PC-9 (cell line): ENCODE measurements at regions of chr10 and their contacts with region 1.

Region 1: DNA sequence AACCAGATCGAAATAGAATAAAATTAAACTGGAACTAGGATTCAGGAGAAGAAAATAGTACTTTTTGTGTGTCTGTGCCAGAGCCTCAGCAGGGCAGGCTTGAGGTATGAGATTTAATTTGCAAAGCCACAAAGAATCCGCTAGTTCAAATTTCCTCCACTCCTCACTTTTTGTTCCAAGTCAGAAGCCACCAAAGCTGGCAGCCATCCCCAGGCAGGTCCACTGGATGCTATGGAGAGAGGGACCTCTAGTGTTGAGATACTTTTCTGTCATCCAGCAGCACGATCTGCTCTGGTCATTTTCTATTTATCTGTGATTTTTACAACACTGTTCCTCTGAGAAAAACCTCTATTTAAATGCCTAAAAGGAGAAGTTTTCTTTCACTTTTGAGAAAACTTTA is 147.9 kb upstream of the FRMD4A start:
- DNase-seq: peak in 1 of 2 experiments; percentile 46
- H3K4me3 ChIP-seq: no peak overlapping the region
- H3K27ac ChIP-seq: no peak overlapping the region
- H3K4me1 ChIP-seq: peaks cover 7% of the 10 kb centered on the region; the same call in 1 of the 2 replicates
- H3K27me3 ChIP-seq: no peaks in the 10 kb centered on the region
- CTCF ChIP-seq: peak; percentile 49; the same call in 1 of the 2 replicates

Region 2: GRCh38 chr10:13787015-13787421 is 691.6 kb before region 1 on chr10:
- CTCF ChIA-PET with region 1: no interaction called
- POLR2A ChIA-PET with region 1: no interaction called
- intact Hi-C with region 1: loop called (anchors 1 kb)
- DNase-seq: no peak
- H3K4me3 ChIP-seq: no peak overlapping the region
- H3K27ac ChIP-seq: no peak overlapping the region
- H3K4me1 ChIP-seq: peaks cover 15% of the 10 kb centered on the region
- H3K27me3 ChIP-seq: no peaks in the 10 kb centered on the region
- CTCF ChIP-seq: no peak

Region 3: GRCh38 chr10:14200698-14201544 is 277.7 kb before region 1 on chr10:
- CTCF ChIA-PET with region 1: interaction called, 4 read pairs
- POLR2A ChIA-PET with region 1: no interaction called
- intact Hi-C with region 1: loop called (anchors 1 kb)
- DNase-seq: peak in 1 of 2 experiments; percentile 8
- H3K4me3 ChIP-seq: no peak overlapping the region
- H3K27ac ChIP-seq: no peak overlapping the region
- H3K4me1 ChIP-seq: no peaks in the 10 kb centered on the region
- H3K27me3 ChIP-seq: no peaks in the 10 kb centered on the region
- CTCF ChIP-seq: peak; percentile 47; the same call in 1 of the 2 replicates

Region 4: DNA sequence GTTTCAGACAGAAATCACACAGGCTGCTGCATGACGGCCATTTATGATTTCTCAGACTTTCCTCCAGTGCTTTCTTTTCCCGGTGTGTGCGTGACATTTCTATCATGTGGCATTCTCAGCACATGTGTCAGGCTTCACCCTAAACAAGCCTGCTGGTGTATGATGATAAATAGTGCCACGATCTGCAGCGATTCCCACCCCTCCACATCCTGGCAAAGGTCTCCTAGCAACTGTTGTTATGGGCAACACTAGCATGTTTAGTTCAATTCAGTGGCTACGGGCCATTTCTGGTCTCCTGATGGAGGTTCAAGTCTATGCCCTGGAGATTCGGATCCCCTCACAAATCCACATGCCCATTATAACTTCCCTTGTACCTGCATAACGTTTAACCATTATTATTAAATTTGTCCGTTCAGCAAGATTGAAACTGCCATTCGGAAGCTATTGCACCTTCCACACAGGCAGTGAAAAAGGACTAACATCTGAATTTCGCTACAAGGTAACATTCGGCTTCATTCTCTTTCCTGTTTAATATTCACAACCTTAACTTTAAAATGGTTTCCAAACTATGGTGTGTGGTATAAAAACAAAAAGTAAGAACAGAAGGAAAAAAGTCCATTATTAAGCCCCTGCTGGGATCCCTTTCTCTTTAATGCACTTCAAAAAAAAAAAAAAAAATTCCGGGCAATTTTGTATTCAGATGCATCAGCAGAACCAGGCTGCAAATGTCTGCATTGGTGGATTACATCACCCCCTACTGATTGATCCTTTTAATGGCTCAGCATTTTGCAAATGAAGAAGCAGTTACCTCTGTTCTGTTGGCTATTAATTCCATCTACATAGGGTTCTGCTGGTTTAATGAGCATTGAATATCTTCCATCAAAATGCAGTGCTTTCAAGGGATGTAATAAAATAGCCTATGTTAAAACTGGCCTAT is 238.1 kb before region 1 on chr10:
- CTCF ChIA-PET with region 1: no interaction called
- POLR2A ChIA-PET with region 1: no interaction called
- intact Hi-C with region 1: loop called (anchors 5 kb)
- DNase-seq: no peak
- H3K4me3 ChIP-seq: no peak overlapping the region
- H3K27ac ChIP-seq: no peak overlapping the region
- H3K4me1 ChIP-seq: no peaks in the 10 kb centered on the region
- H3K27me3 ChIP-seq: peaks cover 34% of the 10 kb centered on the region
- CTCF ChIP-seq: no peak

Region 5: GRCh38 chr10:14302035-14302434 is 176.6 kb before region 1 on chr10:
- CTCF ChIA-PET with region 1: no interaction called
- POLR2A ChIA-PET with region 1: no interaction called
- intact Hi-C with region 1: loop called (anchors 5 kb)
- DNase-seq: no peak
- H3K4me3 ChIP-seq: no peak overlapping the region
- H3K27ac ChIP-seq: no peak overlapping the region
- H3K4me1 ChIP-seq: no peaks in the 10 kb centered on the region
- H3K27me3 ChIP-seq: peaks cover 63% of the 10 kb centered on the region
- CTCF ChIP-seq: no peak; the same call in 1 of the 2 replicates

Region 6: DNA sequence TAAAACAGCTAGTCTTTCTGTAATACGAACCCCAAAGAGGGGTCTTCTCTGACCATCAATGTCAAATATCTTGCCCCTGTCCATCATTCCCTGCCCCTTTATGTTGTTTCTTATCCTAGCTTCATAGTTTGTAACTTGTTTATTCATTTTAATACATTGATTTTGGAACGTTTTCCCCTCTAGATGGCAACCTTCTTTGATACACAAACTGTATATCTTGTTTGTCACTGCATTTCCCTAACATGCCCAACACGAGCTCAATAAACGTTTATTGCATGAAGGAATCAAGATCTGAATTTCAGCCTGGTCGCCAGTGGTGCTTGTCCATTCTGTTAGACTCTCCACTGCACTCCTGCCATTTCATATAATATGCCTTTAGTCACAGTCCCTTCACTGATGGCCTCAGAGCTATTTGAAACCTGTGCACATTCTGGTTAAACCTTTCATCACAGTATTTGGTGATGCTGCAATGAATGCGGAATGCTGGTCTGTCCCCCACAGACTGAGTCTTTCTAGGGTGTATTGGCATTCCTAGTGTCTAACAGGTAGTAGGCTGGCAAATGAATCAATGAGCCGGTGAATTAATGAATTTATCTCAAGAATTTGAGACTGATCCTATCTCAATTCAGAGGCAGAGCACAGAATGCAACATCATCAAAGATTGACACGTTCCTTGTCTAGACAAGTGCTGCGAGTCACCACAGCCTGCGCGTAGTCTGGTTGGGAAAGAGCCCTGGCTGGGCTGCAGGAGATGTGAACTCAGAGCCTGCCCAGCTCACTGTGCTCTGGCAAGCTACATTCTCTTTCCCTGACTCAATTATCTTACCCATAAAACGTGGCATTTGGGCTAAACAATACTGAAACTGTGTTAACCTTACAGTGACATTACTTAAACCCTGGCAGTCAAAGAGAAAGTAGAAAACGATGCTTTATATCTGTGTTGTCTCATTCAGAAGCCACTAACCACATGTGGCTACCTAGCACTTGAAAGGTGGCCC is 92.7 kb before region 1 on chr10:
- CTCF ChIA-PET with region 1: interaction called, 4 read pairs
- POLR2A ChIA-PET with region 1: no interaction called
- intact Hi-C with region 1: loop called (anchors 1 kb)
- DNase-seq: peak; percentile 63 to 73
- H3K4me3 ChIP-seq: peak overlapping the region; percentile 25; the same call in 1 of the 2 replicates
- H3K27ac ChIP-seq: no peak overlapping the region; the same call in 1 of the 2 replicates
- H3K4me1 ChIP-seq: no peaks in the 10 kb centered on the region
- H3K27me3 ChIP-seq: peaks cover 20% of the 10 kb centered on the region; the same call in 1 of the 2 replicates
- CTCF ChIP-seq: peak; percentile 39; the same call in 1 of the 2 replicates

Region 7: DNA sequence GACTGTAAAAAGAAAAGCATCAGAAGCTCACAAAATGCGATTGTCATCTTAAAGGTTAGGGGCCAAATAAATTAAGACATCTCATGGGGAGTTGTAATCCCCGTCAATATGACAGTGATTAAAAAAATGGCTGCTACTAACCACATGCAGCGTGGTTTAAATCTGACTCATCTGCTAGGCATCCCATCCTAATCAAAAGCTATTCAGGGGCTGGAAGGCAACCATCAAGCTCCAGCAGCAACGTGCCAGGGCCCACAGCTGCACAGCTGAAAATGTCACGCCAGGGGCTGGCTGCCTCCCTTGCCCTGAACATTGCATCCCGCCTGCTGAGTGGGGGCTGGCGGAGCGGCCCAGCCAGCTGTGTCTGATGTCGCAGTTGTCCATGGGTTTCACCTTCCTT is 81.5 kb before region 1 on chr10:
- CTCF ChIA-PET with region 1: no interaction called
- POLR2A ChIA-PET with region 1: interaction called, 12 read pairs
- intact Hi-C with region 1: no loop called
- DNase-seq: peak; percentile 73 to 81
- H3K4me3 ChIP-seq: no peak overlapping the region
- H3K27ac ChIP-seq: no peak overlapping the region
- H3K4me1 ChIP-seq: 0 out of 2 replicates have a peak, but pooled peaks cover 4% of the 10 kb centered on the region
- H3K27me3 ChIP-seq: peaks cover 25% of the 10 kb centered on the region
- CTCF ChIP-seq: no peak

Region 8: GRCh38 chr10:14617852-14618251 is 139.2 kb after region 1 on chr10:
- CTCF ChIA-PET with region 1: no interaction called
- POLR2A ChIA-PET with region 1: no interaction called
- intact Hi-C with region 1: no loop called
- DNase-seq: peak in 1 of 2 experiments; percentile 61
- H3K4me3 ChIP-seq: no peak overlapping the region
- H3K27ac ChIP-seq: peak overlapping the region; percentile 29
- H3K4me1 ChIP-seq: peaks cover 15% of the 10 kb centered on the region
- H3K27me3 ChIP-seq: no peaks in the 10 kb centered on the region
- CTCF ChIP-seq: no peak; the same call in 1 of the 2 replicates